ENCODE measurements at regions of chr2 and their contacts with region 1.

Region 1: DNA sequence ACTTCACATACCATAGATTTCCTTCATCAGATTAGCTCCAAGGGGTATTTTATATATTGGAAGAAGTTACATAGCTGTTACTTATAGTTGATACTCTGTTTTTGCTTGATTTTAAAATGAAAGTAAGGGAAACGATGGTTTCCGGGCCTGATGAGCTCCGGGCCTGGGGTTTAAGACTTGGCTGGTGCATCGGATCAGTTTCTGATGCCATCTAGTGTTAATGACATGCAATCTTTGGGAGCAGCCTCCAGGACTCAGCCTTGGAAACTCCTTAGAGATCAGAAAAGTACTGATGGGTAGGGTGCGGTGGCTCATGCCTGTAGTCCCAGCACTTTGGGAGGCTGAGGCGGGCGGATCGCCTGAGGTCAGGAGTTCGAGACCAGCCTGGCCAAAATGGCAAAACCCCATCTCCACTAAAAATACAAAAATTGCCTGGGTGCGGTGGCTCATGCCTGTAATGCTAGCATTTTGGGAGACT is 47.1 kb upstream of the CNOT11 start:
- DNase-seq: peak; percentile 74
- ATAC-seq: peak; percentile 98
- H3K4me3 Mint-ChIP-seq: peak overlapping the region; percentile 51
- H3K27ac Mint-ChIP-seq: peak overlapping the region; percentile 55
- H3K4me1 Mint-ChIP-seq: no peaks in the 10 kb centered on the region
- H3K27me3 Mint-ChIP-seq: no peaks in the 10 kb centered on the region
- CTCF ChIP-seq: peak; percentile 45

Region 2: DNA sequence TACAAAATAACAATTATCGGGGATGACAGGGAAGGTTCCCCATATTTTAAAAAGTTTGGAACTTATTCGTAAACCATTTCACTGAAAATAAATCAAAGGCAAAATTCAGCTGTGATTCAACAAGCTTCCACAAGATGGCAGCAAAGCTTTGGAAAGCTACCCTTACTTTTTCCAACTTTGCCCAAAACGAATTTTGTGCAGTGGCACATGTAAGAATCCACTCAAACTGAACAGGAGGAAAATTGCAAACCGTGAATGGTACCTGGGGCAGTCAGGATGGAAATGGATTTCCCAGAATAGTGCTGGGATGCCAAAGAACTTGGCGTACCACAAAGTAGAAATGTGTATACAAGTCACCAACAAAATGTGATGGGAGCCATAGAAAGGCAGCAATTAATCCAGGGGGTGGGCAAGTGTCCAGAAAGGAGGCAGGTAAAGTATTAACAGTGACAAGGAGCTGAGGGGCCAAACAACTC is 192.8 kb before region 1 on chr2:
- CTCF ChIA-PET with region 1: interaction called, 27 read pairs
- POLR2A ChIA-PET with region 1: interaction called, 3 read pairs
- intact Hi-C with region 1: loop called (anchors 5 kb)
- DNase-seq: peak; percentile 34
- ATAC-seq: no peak
- H3K4me3 Mint-ChIP-seq: no peak overlapping the region
- H3K27ac Mint-ChIP-seq: no peak overlapping the region
- H3K4me1 Mint-ChIP-seq: peaks cover 22% of the 10 kb centered on the region
- H3K27me3 Mint-ChIP-seq: no peaks in the 10 kb centered on the region
- CTCF ChIP-seq: peak; percentile 90

Region 3: GRCh38 chr2:101036562-101037457 is 168.8 kb before region 1 on chr2:
- CTCF ChIA-PET with region 1: interaction called, 80 read pairs
- POLR2A ChIA-PET with region 1: no interaction called
- intact Hi-C with region 1: loop called (anchors 10 kb)
- DNase-seq: no peak
- ATAC-seq: no peak
- H3K4me3 Mint-ChIP-seq: no peak overlapping the region
- H3K27ac Mint-ChIP-seq: no peak overlapping the region
- H3K4me1 Mint-ChIP-seq: peaks cover 2% of the 10 kb centered on the region
- H3K27me3 Mint-ChIP-seq: no peaks in the 10 kb centered on the region
- CTCF ChIP-seq: peak; percentile 64

Region 4: GRCh38 chr2:101130081-101130480 is 75.5 kb before region 1 on chr2:
- CTCF ChIA-PET with region 1: interaction called, 12 read pairs
- POLR2A ChIA-PET with region 1: no interaction called
- intact Hi-C with region 1: no loop called
- DNase-seq: no peak
- ATAC-seq: no peak
- H3K4me3 Mint-ChIP-seq: no peak overlapping the region
- H3K27ac Mint-ChIP-seq: no peak overlapping the region
- H3K4me1 Mint-ChIP-seq: peaks cover 9% of the 10 kb centered on the region
- H3K27me3 Mint-ChIP-seq: no peaks in the 10 kb centered on the region
- CTCF ChIP-seq: no peak

Region 5: GRCh38 chr2:101188683-101189405 is 16.7 kb before region 1 on chr2:
- CTCF ChIA-PET with region 1: interaction called, 46 read pairs
- POLR2A ChIA-PET with region 1: no interaction called
- intact Hi-C with region 1: no loop called
- DNase-seq: no peak
- ATAC-seq: no peak
- H3K4me3 Mint-ChIP-seq: no peak overlapping the region
- H3K27ac Mint-ChIP-seq: no peak overlapping the region
- H3K4me1 Mint-ChIP-seq: no peaks in the 10 kb centered on the region
- H3K27me3 Mint-ChIP-seq: no peaks in the 10 kb centered on the region
- CTCF ChIP-seq: peak; percentile 38

Region 6: DNA sequence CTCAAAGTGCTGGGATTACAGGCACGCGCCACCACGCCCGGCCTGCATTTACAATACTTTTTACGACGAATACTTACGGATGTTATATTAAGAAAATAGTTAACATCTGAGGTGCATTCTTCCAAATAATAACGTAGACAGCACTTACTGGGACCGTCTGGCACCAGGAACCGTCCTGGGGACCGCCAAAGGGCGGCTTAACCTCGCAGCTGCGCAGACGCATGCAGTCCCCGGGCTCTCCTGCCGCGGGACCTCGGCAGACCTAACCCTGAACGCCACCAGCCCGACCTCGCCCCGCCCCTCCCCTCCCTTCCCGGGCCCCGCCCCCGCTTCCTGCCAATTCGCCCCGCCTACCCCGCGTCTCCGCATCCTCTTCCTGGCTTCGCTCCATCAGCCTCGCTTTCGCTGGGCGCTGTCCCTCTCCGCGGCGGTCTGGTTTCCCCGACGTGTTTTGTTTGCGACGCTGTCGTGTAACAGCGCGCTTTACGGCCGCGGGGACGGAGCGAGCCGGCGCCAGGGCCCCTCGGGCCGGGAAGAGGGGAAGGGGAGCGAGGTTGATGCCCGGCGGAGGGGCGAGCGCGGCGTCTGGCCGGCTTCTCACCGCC is 47.0 kb after region 1 on chr2 and contains the start of gene CNOT11:
- CTCF ChIA-PET with region 1: interaction called, 11 read pairs
- POLR2A ChIA-PET with region 1: no interaction called
- intact Hi-C with region 1: no loop called
- DNase-seq: peak; percentile 99
- ATAC-seq: peak; percentile 89
- H3K4me3 Mint-ChIP-seq: peak within 1 kb of the TSS; percentile 88
- H3K27ac Mint-ChIP-seq: peak within 1 kb of the TSS; percentile 91
- H3K4me1 Mint-ChIP-seq: peaks cover 40% of the 10 kb centered on the region
- H3K27me3 Mint-ChIP-seq: no peaks in the 10 kb centered on the region
- CTCF ChIP-seq: no peak
- total RNA-seq, gene CNOT11: 56.7 to 59.7 TPM

Region 7: GRCh38 chr2:101274142-101274541 is 68.6 kb after region 1 on chr2:
- CTCF ChIA-PET with region 1: no interaction called
- POLR2A ChIA-PET with region 1: no interaction called
- intact Hi-C with region 1: no loop called
- DNase-seq: no peak
- ATAC-seq: no peak
- H3K4me3 Mint-ChIP-seq: no peak overlapping the region
- H3K27ac Mint-ChIP-seq: no peak overlapping the region
- H3K4me1 Mint-ChIP-seq: peaks cover 38% of the 10 kb centered on the region
- H3K27me3 Mint-ChIP-seq: no peaks in the 10 kb centered on the region
- CTCF ChIP-seq: no peak

Region 8: GRCh38 chr2:101688261-101688660 is 482.7 kb after region 1 on chr2:
- CTCF ChIA-PET with region 1: no interaction called
- POLR2A ChIA-PET with region 1: no interaction called
- intact Hi-C with region 1: no loop called
- DNase-seq: no peak
- ATAC-seq: no peak
- H3K4me3 Mint-ChIP-seq: no peak overlapping the region
- H3K27ac Mint-ChIP-seq: no peak overlapping the region
- H3K4me1 Mint-ChIP-seq: peaks cover 27% of the 10 kb centered on the region
- H3K27me3 Mint-ChIP-seq: no peaks in the 10 kb centered on the region
- CTCF ChIP-seq: no peak

Measured in activated CD8-positive, alpha-beta T cell treated with anti-CD3 and anti-CD28 coated beads for 36 hours (primary cell).